K562 (cell line): ENCODE measurements at regions of chr6 and their contacts with region 1.

Region 1: DNA sequence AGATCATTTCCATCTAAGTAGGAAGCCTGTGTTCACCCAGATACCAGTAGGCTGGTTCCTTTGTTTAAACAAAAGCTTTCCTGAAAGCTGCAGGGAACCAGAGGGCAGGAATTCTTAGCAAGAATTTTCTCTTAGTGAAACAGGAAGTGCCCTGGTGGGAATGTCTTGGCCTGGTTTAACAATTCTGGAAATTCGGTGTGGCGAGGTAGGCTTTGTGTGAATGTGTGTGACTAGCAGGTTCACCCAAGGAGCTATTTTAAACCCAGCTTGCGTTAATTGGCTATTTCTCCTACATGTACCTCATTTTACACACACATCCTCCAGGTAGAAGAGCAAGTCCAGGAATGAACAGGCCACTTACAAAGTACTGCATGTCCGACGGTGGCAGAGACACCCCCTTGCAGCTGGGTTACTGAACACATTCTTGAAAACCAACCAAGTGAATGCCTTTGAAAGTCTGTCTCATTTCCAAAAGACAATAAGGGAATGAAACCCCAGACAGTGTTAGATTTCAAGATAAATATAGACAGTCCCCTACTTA is 64.6 kb downstream of the GFOD1 start:
- DNase-seq: no peak
- ATAC-seq: no peak
- H3K4me3 ChIP-seq: no peak overlapping the region
- H3K27ac ChIP-seq: no peak overlapping the region
- H3K4me1 ChIP-seq: no peaks in the 10 kb centered on the region; a peak in 2 of 5 replicates
- H3K27me3 ChIP-seq: no peaks in the 10 kb centered on the region
- CTCF ChIP-seq: no peak
- EP300 ChIP-seq: no peak
- POLR2A ChIP-seq: no peak
- RAD21 ChIP-seq: no peak

Region 2: GRCh38 chr6:13407709-13408695 is 14.7 kb before region 1 on chr6:
- CTCF ChIA-PET with region 1: no interaction called
- POLR2A ChIA-PET with region 1: interaction called, 11 read pairs
- in situ Hi-C with region 1: no loop called
- intact Hi-C with region 1: no loop called
- DNase-seq: peak in 2 of 4 experiments; percentile 70 to 82
- ATAC-seq: peak; percentile 82
- H3K4me3 ChIP-seq: no peak overlapping the region
- H3K27ac ChIP-seq: peak overlapping the region; percentile 4; the same call in 1 of the 3 replicates
- H3K4me1 ChIP-seq: peaks cover 0 to 36% of the 10 kb centered on the region in 2 experiments; a peak in 4 of 5 replicates
- H3K27me3 ChIP-seq: no peaks in the 10 kb centered on the region
- CTCF ChIP-seq: no peak
- EP300 ChIP-seq: peak; percentile 73
- POLR2A ChIP-seq: no peak
- RAD21 ChIP-seq: 0 out of 4 replicates have a peak, but pooled peaks of 1 of the 2 experiments have one; percentile 1